Panc1 (cell line): ENCODE measurements at regions of chr1 and their contacts with region 1.

Region 1: GRCh38 chr1:45704637-45705036 is 16.7 kb downstream of the TMEM69 start:
- DNase-seq: no peak
- ATAC-seq: no peak
- H3K4me3 ChIP-seq: no peak overlapping the region
- H3K27ac ChIP-seq: no peak overlapping the region
- H3K4me1 ChIP-seq: no peaks in the 10 kb centered on the region
- H3K27me3 ChIP-seq: no peaks in the 10 kb centered on the region
- CTCF ChIP-seq: no peak

Region 2: GRCh38 chr1:45722809-45723208 is 18.2 kb after region 1 on chr1:
- CTCF ChIA-PET with region 1: no interaction called
- POLR2A ChIA-PET with region 1: no interaction called
- in situ Hi-C with region 1: no loop called
- intact Hi-C with region 1: no loop called
- DNase-seq: no peak
- ATAC-seq: no peak
- H3K4me3 ChIP-seq: no peak overlapping the region
- H3K27ac ChIP-seq: no peak overlapping the region
- H3K4me1 ChIP-seq: no peaks in the 10 kb centered on the region
- H3K27me3 ChIP-seq: no peaks in the 10 kb centered on the region
- CTCF ChIP-seq: no peak

Region 3: DNA sequence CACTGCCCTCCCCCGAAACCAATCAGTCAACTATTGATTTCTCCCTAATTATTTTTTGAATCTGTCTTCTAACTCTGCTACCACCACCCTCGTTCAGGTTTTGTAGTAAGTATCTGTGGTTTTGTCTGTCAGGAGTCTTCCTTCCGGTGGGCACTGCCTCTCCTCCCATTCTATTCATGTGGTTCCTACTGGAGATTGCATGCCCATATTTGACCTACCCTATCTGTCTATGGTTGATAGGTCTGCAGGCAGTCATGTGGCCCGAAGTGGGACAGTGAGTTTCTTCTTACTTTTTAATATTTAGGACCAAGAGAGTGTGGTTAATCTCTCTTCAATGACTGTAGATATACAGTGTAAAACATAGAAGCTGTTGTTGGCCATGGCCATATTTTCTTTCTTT is 80.9 kb after region 1 on chr1:
- CTCF ChIA-PET with region 1: no interaction called
- POLR2A ChIA-PET with region 1: interaction called, 10 read pairs
- in situ Hi-C with region 1: no loop called
- intact Hi-C with region 1: no loop called
- DNase-seq: no peak
- ATAC-seq: no peak
- H3K4me3 ChIP-seq: no peak overlapping the region
- H3K27ac ChIP-seq: no peak overlapping the region
- H3K4me1 ChIP-seq: no peaks in the 10 kb centered on the region
- H3K27me3 ChIP-seq: no peaks in the 10 kb centered on the region
- CTCF ChIP-seq: no peak

Region 4: DNA sequence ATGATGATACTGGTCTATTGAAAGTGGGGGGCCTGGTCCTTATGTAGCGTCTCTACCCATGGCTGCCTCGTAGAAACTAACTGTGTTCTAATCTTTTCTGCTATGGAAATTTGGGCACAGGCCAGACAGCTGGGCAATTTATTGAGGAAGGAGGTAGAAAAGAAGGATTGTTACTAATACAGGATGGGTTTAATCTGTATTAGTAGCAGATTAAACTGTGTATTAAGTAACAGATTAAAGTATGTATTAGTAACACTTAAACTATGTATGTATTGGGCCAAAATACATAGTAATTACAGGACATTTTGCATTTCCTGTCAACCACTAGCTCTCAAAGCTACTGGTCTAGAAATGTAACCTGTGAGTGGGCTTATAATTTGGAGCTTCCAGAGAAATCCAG is 240.8 kb after region 1 on chr1:
- CTCF ChIA-PET with region 1: no interaction called
- POLR2A ChIA-PET with region 1: no interaction called
- in situ Hi-C with region 1: no loop called
- intact Hi-C with region 1: no loop called
- DNase-seq: no peak
- ATAC-seq: no peak
- H3K4me3 ChIP-seq: no peak overlapping the region
- H3K27ac ChIP-seq: no peak overlapping the region
- H3K4me1 ChIP-seq: no peaks in the 10 kb centered on the region
- H3K27me3 ChIP-seq: no peaks in the 10 kb centered on the region
- CTCF ChIP-seq: no peak